Activated T-helper 1 cell treated with anti-CD3 and anti-CD28 coated beads, Interleukin-12 subunit alpha, Interleukin-12 subunit beta, Interleukin-2, Interleukin-4 antibody, amounts not matched to agents 30 ng/mL and 10 ng/mL and 1 ng/mL, durations not matched to agents 14 hours and 24 hours and 36 hours (primary cell): ENCODE measurements at regions of chr11 and their contacts with region 1.

Region 1: DNA sequence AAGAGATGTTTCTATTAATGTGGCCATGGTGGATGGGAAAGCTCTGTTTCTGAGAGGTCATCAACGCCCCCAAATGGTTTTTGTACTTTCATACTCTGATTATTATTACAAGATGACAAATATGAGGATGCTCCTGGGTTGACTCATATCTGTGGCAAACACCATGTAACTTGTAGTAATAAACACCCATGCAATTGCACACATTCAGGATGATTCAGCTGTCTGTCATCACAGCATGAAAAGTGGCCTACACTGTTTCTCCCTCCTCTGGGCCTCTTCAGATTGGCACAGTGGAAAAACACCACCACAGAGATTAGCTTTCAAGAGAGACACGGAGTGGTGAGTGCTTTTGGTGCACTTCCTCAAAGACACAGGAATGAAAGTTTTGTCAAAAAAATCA is 85.4 kb downstream of the MTNR1B start:
- DNase-seq: no peak
- H3K4me3 Mint-ChIP-seq: no peak overlapping the region
- H3K27ac Mint-ChIP-seq: peak overlapping the region; percentile 71
- H3K4me1 Mint-ChIP-seq: peaks cover 11% of the 10 kb centered on the region
- H3K27me3 Mint-ChIP-seq: no peaks in the 10 kb centered on the region

Region 2: GRCh38 chr11:93031386-93031785 is 23.5 kb before region 1 on chr11:
- intact Hi-C with region 1: loop called (anchors 1 kb)
- DNase-seq: no peak
- H3K4me3 Mint-ChIP-seq: no peak overlapping the region
- H3K27ac Mint-ChIP-seq: no peak overlapping the region
- H3K4me1 Mint-ChIP-seq: no peaks in the 10 kb centered on the region
- H3K27me3 Mint-ChIP-seq: peaks cover 2% of the 10 kb centered on the region